T-cell (primary cell): ENCODE measurements at regions of chr7 and their contacts with region 1.

Region 1: GRCh38 chr7:127650847-127651555 is 993 bp upstream of the SND1 start:
- DNase-seq: peak in 5 of 35 experiments; percentile 1 to 45 (median 23)
- ATAC-seq: no peak
- H3K4me3 ChIP-seq: peak overlapping the region; percentile 96
- H3K4me3 Mint-ChIP-seq: peak overlapping the region in 2 of 3 donors; percentile 98 to 99
- H3K27ac ChIP-seq: peak overlapping the region; percentile 97
- H3K27ac Mint-ChIP-seq: peak overlapping the region; percentile 94 to 99
- H3K4me1 ChIP-seq: peaks cover 17 to 28% of the 10 kb centered on the region in 2 experiments
- H3K4me1 Mint-ChIP-seq: peaks cover 47 to 52% (median 49%) of the 10 kb centered on the region in 3 donors
- H3K27me3 ChIP-seq: peaks cover 0 to 3% of the 10 kb centered on the region in 2 experiments
- H3K27me3 Mint-ChIP-seq: no peaks in the 10 kb centered on the region

Region 2: GRCh38 chr7:127536741-127537140 is 114.3 kb before region 1 on chr7:
- CTCF ChIA-PET with region 1: no interaction called
- POLR2A ChIA-PET with region 1: no interaction called
- DNase-seq: no peak
- ATAC-seq: no peak
- H3K4me3 ChIP-seq: no peak overlapping the region
- H3K4me3 Mint-ChIP-seq: no peak overlapping the region
- H3K27ac ChIP-seq: no peak overlapping the region
- H3K27ac Mint-ChIP-seq: no peak overlapping the region
- H3K4me1 ChIP-seq: no peaks in the 10 kb centered on the region
- H3K4me1 Mint-ChIP-seq: peaks cover 4 to 8% (median 7%) of the 10 kb centered on the region in 3 donors
- H3K27me3 ChIP-seq: peaks cover 9 to 25% of the 10 kb centered on the region in 2 experiments
- H3K27me3 Mint-ChIP-seq: peaks cover 55 to 70% of the 10 kb centered on the region in 2 donors

Region 3: DNA sequence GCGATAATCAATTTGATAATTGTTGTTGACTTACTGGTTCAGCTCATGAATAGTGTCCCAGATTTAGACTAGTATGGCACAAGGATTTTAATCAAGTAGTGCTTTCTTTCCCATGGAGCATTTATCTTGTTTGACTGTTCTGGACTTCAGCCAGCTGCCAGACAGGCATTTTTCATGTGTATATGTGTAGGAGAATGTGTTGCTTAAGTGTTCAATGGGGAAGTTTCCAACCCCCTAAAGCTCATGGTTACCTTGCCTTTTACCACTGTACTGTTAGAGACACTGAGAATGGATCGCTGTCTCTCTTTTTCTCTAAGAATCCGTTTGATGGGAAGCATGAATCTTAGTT is 276.3 kb after region 1 on chr7:
- CTCF ChIA-PET with region 1: no interaction called
- POLR2A ChIA-PET with region 1: interaction called in 1 of 2 experiments, 12 read pairs
- DNase-seq: no peak
- ATAC-seq: no peak
- H3K4me3 ChIP-seq: no peak overlapping the region
- H3K4me3 Mint-ChIP-seq: no peak overlapping the region
- H3K27ac ChIP-seq: no peak overlapping the region
- H3K27ac Mint-ChIP-seq: no peak overlapping the region
- H3K4me1 ChIP-seq: no peaks in the 10 kb centered on the region
- H3K4me1 Mint-ChIP-seq: peaks cover 5 to 20% (median 7%) of the 10 kb centered on the region in 3 donors
- H3K27me3 ChIP-seq: no peaks in the 10 kb centered on the region
- H3K27me3 Mint-ChIP-seq: no peaks in the 10 kb centered on the region

Region 4: GRCh38 chr7:129468087-129468486 is 1817.1 kb after region 1 on chr7:
- CTCF ChIA-PET with region 1: no interaction called
- POLR2A ChIA-PET with region 1: no interaction called
- DNase-seq: no peak
- ATAC-seq: no peak
- H3K4me3 ChIP-seq: no peak overlapping the region
- H3K4me3 Mint-ChIP-seq: no peak overlapping the region
- H3K27ac ChIP-seq: no peak overlapping the region
- H3K27ac Mint-ChIP-seq: no peak overlapping the region
- H3K4me1 ChIP-seq: no peaks in the 10 kb centered on the region
- H3K4me1 Mint-ChIP-seq: no peaks in the 10 kb centered on the region
- H3K27me3 ChIP-seq: no peaks in the 10 kb centered on the region
- H3K27me3 Mint-ChIP-seq: no peaks in the 10 kb centered on the region